Panc1 (cell line): ENCODE measurements at regions of chr9 and their contacts with region 1.

Region 1: DNA sequence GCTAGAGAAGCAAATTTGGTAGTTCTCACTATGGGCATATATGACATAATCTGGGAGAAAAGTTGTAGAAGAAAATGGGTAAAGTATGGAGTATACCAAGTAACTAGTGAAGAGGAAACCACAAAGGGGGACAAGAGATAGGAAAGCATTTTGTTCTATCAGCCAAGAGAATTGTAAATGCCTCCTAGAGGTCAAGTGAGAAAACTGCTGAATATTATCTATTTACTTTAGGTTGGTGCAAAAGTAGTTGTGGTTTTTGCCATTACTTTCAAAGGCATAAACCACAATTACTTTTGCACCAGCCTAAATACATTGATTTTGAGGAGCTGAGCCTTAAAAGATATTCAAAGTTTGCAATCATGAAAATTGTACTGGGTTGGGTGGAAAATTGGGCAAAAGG is 126.7 kb upstream of the GRHPR start:
- DNase-seq: no peak
- ATAC-seq: no peak
- H3K4me3 ChIP-seq: no peak overlapping the region
- H3K27ac ChIP-seq: no peak overlapping the region
- H3K4me1 ChIP-seq: peaks cover 12% of the 10 kb centered on the region; the same call in 1 of the 2 replicates
- H3K27me3 ChIP-seq: no peaks in the 10 kb centered on the region
- CTCF ChIP-seq: peak; percentile 40; the same call in 1 of the 2 replicates

Region 2: GRCh38 chr9:37243588-37244345 is 52.0 kb before region 1 on chr9:
- CTCF ChIA-PET with region 1: interaction called, 3 read pairs
- POLR2A ChIA-PET with region 1: no interaction called
- in situ Hi-C with region 1: loop called (anchors 5 kb)
- intact Hi-C with region 1: no loop called
- DNase-seq: no peak
- ATAC-seq: no peak
- H3K4me3 ChIP-seq: no peak overlapping the region
- H3K27ac ChIP-seq: no peak overlapping the region
- H3K4me1 ChIP-seq: peaks cover 5% of the 10 kb centered on the region; the same call in 1 of the 2 replicates
- H3K27me3 ChIP-seq: no peaks in the 10 kb centered on the region
- CTCF ChIP-seq: no peak